Activated CD4-positive, alpha-beta T cell treated with anti-CD3 and anti-CD28 coated beads, Interleukin-2, amount 10 ng/mL, durations not matched to agents 24 days and 14 days (primary cell): ENCODE measurements at regions of chr9 and their contacts with region 1.

Region 1: DNA sequence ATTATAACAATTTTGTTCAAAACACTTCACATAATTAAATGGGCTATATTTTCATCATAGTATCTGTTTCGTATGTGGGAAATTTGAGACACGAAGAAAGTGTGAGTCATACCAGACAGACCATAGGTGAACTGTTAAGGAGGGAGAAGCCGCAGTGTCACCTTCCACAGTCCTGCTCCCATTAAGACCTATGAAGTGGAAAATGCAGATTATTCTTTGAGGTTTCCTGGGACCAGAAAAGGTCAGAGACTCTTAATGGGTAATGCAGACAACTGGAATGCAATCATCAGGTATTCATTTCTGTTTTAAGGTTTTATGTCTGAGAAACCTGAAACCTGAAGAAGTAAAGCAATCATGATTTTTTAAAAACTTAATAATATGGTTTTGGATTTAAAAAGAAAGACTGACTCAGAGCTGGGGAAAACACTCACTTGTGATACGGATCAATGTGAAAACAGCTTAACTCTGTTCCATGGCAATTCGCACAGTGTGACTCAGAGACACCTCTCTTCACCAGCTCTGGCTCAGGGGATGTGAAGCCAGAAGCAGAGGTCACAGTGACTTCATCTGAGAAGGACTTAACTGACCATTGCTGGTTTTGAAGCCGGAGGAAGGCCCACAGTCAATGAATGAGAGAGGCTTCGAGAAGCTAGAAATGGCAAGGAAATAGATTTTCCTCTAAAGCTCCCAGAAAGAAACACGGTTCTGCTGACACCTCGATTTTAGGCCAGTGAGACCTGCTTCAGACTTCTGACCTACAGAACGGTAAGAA is 17.2 kb upstream of the GCNT1 start:
- DNase-seq: peak; percentile 69
- H3K4me3 Mint-ChIP-seq: peak overlapping the region; percentile 88
- H3K27ac Mint-ChIP-seq: peak overlapping the region; percentile 98
- H3K4me1 Mint-ChIP-seq: peaks cover 50% of the 10 kb centered on the region
- H3K27me3 Mint-ChIP-seq: no peaks in the 10 kb centered on the region

Region 2: GRCh38 chr9:75148561-75148960 is 1293.2 kb before region 1 on chr9:
- intact Hi-C with region 1: loop called (anchors 10 kb)
- DNase-seq: peak; percentile 80
- H3K4me3 Mint-ChIP-seq: peak overlapping the region; percentile 62
- H3K27ac Mint-ChIP-seq: peak overlapping the region; percentile 85
- H3K4me1 Mint-ChIP-seq: peaks cover 63% of the 10 kb centered on the region
- H3K27me3 Mint-ChIP-seq: no peaks in the 10 kb centered on the region

Region 3: GRCh38 chr9:76393963-76394679 is 47.6 kb before region 1 on chr9 and contains the start of gene RFK:
- intact Hi-C with region 1: loop called (anchors 1 kb)
- DNase-seq: peak; percentile 98
- H3K4me3 Mint-ChIP-seq: peak within 1 kb of the TSS; percentile 97
- H3K27ac Mint-ChIP-seq: peak within 1 kb of the TSS; percentile 99
- H3K4me1 Mint-ChIP-seq: peaks cover 25% of the 10 kb centered on the region
- H3K27me3 Mint-ChIP-seq: no peaks in the 10 kb centered on the region
- total RNA-seq, gene RFK: 16.6 and 17.9 TPM in 2 replicates

Region 4: GRCh38 chr9:76423216-76424177 is 18.2 kb before region 1 on chr9:
- intact Hi-C with region 1: loop called (anchors 1 kb)
- DNase-seq: peak; percentile 64
- H3K4me3 Mint-ChIP-seq: peak overlapping the region; percentile 59
- H3K27ac Mint-ChIP-seq: peak overlapping the region; percentile 72
- H3K4me1 Mint-ChIP-seq: peaks cover 17% of the 10 kb centered on the region
- H3K27me3 Mint-ChIP-seq: no peaks in the 10 kb centered on the region

Region 5: DNA sequence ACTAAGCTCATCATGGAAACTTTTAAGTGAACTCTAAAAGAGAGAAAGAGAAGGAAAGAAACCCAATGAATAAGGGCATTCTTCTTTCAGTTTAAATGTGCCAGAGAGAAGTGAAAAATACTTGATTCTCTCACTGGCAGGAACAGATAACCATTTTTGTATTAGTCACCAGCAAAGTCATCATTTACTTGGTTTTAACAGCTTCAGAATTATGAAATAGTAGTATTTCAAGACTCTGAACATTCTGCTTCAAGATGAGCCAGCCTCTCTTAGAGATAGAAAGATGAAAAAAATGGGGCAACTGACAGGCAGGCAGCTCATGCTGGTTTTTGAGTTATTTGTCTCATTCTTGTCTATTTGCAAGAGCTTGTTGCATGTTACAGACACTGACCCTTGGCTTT is 120.8 kb after region 1 on chr9:
- intact Hi-C with region 1: loop called (anchors 2 kb)
- DNase-seq: no peak
- H3K4me3 Mint-ChIP-seq: no peak overlapping the region
- H3K27ac Mint-ChIP-seq: peak overlapping the region; percentile 29
- H3K4me1 Mint-ChIP-seq: peaks cover 6% of the 10 kb centered on the region
- H3K27me3 Mint-ChIP-seq: peaks cover 2% of the 10 kb centered on the region

Region 6: DNA sequence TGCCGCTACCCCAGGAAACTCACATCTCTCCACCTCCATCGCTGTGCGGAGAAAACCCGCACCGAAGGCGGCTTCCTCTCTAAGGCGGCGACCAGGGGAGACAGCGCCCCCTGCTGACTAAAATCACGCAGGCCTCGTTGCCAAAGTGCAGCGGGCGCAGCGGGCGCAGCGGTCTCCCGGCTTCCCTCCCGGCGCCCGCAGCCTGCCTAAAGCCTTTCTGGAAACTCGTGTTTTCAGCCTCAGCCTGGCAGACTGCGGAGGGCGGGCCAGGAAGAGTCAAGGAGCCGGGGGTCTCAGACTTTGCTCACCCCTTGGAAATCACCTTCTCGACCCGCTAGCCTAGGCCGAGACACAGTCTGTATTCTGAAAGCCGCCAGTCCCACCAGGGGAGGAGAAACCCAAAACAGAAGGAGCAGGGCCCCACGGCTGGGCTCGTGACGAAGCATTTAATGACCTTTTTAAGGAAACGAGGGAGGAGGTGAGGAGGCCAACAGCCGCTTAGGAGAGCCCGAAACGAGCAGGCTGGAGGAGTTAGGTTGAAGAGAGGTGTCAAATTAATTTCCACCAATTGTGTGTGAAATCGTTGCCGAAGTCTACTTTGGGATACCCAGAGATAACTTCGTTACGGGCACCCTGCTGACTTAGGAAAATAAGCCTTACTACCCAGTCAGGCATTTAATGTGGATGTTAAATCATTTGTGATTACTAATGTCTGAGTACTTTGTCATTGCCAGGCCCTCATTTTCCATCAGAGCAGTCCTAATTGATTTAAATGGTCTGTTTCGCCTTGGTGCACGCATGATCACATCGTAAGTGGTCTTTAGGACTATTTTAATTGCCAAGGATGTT is 570.5 kb after region 1 on chr9:
- intact Hi-C with region 1: loop called (anchors 5 kb)
- DNase-seq: peak; percentile 90
- H3K4me3 Mint-ChIP-seq: peak overlapping the region; percentile 10
- H3K27ac Mint-ChIP-seq: no peak overlapping the region
- H3K4me1 Mint-ChIP-seq: peaks cover 4% of the 10 kb centered on the region
- H3K27me3 Mint-ChIP-seq: peaks cover 72% of the 10 kb centered on the region